AG04450 (cell line): ENCODE measurements at regions of chr12 and their contacts with region 1.

Region 1: GRCh38 chr12:41277116-41277945 is 89.2 kb downstream of the PDZRN4 start:
- DNase-seq: peak; percentile 6
- H3K4me3 ChIP-seq: no peak overlapping the region
- H3K27ac ChIP-seq: no peak overlapping the region
- H3K27me3 ChIP-seq: peaks cover 3% of the 10 kb centered on the region
- CTCF ChIP-seq: peak; percentile 73

Region 2: GRCh38 chr12:41264281-41264680 is 13.1 kb before region 1 on chr12:
- CTCF ChIA-PET with region 1: interaction called, 29 read pairs
- POLR2A ChIA-PET with region 1: no interaction called
- DNase-seq: no peak
- H3K4me3 ChIP-seq: no peak overlapping the region
- H3K27ac ChIP-seq: no peak overlapping the region
- H3K27me3 ChIP-seq: no peaks in the 10 kb centered on the region
- CTCF ChIP-seq: peak; percentile 41

Region 3: GRCh38 chr12:41333974-41334373 is 56.6 kb after region 1 on chr12:
- CTCF ChIA-PET with region 1: no interaction called
- POLR2A ChIA-PET with region 1: no interaction called
- DNase-seq: no peak
- H3K4me3 ChIP-seq: no peak overlapping the region
- H3K27ac ChIP-seq: no peak overlapping the region
- H3K27me3 ChIP-seq: no peaks in the 10 kb centered on the region
- CTCF ChIP-seq: no peak

Region 4: DNA sequence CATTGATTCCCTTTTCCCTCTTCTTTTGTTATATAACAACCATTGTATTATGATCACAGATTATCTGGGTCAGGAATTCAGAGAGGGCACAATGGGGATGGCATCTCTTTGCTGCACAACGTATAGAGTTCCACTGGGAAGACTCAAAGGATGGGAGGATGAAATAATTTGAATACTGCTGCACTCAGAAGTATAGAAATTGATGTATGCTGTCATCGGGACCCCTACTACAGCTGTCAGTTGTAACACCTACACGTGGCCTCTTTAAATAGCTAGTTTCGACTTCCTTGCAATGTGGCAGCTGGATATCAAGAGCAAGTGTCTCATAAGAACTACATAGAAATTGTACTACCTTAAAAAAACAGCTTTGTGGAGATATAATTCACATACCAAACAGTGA is 318.9 kb after region 1 on chr12:
- CTCF ChIA-PET with region 1: no interaction called
- POLR2A ChIA-PET with region 1: no interaction called
- DNase-seq: no peak
- H3K4me3 ChIP-seq: no peak overlapping the region
- H3K27ac ChIP-seq: no peak overlapping the region
- H3K27me3 ChIP-seq: no peaks in the 10 kb centered on the region
- CTCF ChIP-seq: no peak

Region 5: DNA sequence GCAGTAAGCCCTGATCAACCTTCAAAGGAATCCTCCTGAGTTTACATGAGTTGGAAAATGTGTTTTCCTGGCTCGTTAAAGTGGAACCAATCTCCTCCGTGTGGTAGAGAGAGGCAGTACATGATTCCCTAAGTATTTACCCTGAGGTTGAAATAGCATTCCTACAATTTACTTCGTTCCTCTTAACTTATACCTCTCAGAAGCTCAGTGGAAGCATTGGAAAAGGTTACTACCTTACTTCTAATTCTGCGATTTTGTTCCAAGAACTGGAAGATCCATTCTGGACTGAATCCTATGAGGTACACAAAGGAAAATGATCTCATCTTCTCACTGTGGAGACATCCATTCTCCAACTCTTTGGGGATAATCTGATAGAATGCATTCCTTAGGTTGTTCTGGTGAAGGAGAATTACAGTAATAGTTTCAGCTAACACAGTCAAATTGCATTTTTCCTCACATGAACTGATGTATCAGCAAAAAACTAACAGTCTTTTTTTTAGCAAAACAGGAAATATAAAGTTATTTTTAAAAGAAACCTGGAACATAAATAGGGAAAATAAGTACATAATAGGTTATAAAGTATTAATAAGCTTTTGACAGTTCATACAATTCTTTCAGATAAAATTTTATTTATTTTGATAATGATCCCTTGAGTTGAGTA is 386.4 kb after region 1 on chr12:
- CTCF ChIA-PET with region 1: interaction called, 48 read pairs
- POLR2A ChIA-PET with region 1: no interaction called
- DNase-seq: no peak
- H3K4me3 ChIP-seq: no peak overlapping the region
- H3K27ac ChIP-seq: no peak overlapping the region
- H3K27me3 ChIP-seq: no peaks in the 10 kb centered on the region
- CTCF ChIP-seq: peak; percentile 61